Dorsolateral prefrontal cortex (tissue), 120 donors: ENCODE measurements at regions of chr1 and their contacts with region 1.

Region 1: GRCh38 chr1:178055779-178056471 is 38.0 kb upstream of the RASAL2 start:
- DNase-seq: peak in 1 of 10 donors; percentile 34
- H3K4me3 ChIP-seq: no peak overlapping the region
- H3K27ac ChIP-seq: peak overlapping the region in 56 of 59 donors; percentile 11 to 89 (median 77)
- H3K27me3 ChIP-seq: no peaks in the 10 kb centered on the region
- CTCF ChIP-seq: peak in 15 of 56 donors; percentile 8 to 30 (median 22)

Region 2: DNA sequence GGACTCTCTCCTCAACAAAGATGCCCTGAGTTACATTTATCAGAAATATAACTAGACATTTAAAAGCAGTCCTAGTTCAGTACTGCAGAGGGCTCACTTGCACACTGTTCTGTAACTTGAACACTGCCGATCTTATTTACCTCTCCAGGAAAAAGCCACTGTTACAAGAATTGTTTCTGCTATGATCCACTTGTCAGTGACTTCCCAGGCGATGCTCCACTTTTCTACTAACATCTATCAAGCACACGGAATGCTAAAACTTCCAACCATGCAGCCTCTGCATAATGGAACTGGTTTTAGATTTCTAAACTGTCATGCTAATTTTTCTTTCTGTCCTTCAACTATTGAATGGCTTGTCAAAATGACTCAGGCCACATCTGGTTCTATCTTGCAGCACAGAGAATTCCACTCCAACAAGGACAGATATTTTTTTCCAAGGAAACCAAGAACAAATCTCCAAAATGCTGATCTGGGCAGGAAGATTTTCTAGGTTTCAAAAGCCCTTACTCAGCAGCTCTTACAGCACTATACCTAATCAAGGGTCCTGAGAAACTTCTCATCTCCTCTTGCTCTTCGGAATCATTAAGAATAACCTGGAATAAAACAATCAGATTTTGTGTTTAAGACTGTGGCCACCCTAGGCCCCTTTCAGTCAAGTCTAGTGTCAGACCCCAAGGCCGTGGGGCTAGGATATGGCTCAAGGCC is 96.0 kb before region 1 on chr1:
- intact Hi-C with region 1: loop called in 1 of 2 experiments (anchors 10 kb)
- DNase-seq: no peak
- H3K4me3 ChIP-seq: no peak overlapping the region
- H3K27ac ChIP-seq: peak overlapping the region in 56 of 59 donors; percentile 18 to 88 (median 72)
- H3K27me3 ChIP-seq: no peaks in the 10 kb centered on the region
- CTCF ChIP-seq: peak in 53 of 56 donors; percentile 14 to 64 (median 44)

Region 3: DNA sequence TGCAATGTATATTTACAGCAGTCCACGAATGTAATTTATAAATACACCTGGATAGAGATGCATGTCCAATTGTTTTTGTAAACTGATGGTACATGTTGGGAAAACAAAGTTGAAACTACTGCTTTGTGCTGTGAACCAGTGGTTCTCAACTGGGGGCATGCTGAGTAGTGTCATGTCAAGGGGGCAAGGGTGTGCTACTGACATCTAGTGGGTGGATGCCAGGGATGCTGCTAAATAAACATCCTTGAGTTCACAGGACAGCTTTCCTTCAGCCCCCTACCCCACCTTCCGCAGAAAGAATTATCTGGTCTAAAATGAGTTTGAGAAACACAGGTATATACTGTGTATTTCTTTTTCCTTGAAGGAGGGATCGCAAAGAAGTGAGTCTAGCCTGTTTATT is 133.9 kb after region 1 on chr1:
- intact Hi-C with region 1: loop called in 1 of 2 experiments (anchors 5 kb)
- DNase-seq: peak in 1 of 10 donors; percentile 35
- H3K4me3 ChIP-seq: no peak overlapping the region
- H3K27ac ChIP-seq: no peak overlapping the region
- H3K27me3 ChIP-seq: no peaks in the 10 kb centered on the region
- CTCF ChIP-seq: peak; percentile 11 to 72 (median 48)

Region 4: DNA sequence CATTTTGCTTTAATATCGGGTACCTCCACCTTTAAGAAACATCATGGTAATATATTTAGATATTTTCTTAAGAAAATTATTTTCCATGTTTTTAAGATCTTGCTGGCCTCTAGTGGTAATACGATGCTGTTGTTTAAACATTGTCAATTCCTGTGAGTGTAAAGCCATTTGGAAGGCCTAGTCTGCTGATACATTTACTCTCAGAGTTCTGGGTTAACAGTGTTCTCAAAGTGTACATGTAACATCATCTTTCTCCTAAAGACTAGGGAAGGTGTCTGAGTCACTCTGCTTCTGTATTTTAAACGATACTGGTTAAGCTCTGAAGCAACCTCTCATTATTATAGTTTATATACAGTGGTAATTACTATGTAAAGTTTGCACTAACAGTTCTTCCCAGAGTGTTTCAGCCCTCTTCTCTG is 227.0 kb after region 1 on chr1:
- intact Hi-C with region 1: loop called (anchors 10 kb)
- DNase-seq: no peak
- H3K4me3 ChIP-seq: no peak overlapping the region
- H3K27ac ChIP-seq: peak overlapping the region in 23 of 59 donors; percentile 3 to 65 (median 28)
- H3K27me3 ChIP-seq: no peaks in the 10 kb centered on the region
- CTCF ChIP-seq: peak in 54 of 56 donors; percentile 16 to 66 (median 53)